ENCODE measurements at regions of chr3 and their contacts with region 1.

Region 1: GRCh38 chr3:112676659-112677234 is 35.8 kb upstream of the CCDC80 start:
- DNase-seq: peak; percentile 57
- ATAC-seq: peak; percentile 98
- H3K4me3 Mint-ChIP-seq: peak overlapping the region; percentile 67
- H3K27ac Mint-ChIP-seq: peak overlapping the region; percentile 84
- H3K4me1 Mint-ChIP-seq: peaks cover 25% of the 10 kb centered on the region
- H3K27me3 Mint-ChIP-seq: peaks cover 8% of the 10 kb centered on the region
- CTCF ChIP-seq: no peak

Region 2: GRCh38 chr3:112718516-112718915 is 41.8 kb after region 1 on chr3:
- CTCF ChIA-PET with region 1: no interaction called
- POLR2A ChIA-PET with region 1: no interaction called
- intact Hi-C with region 1: no loop called
- DNase-seq: no peak
- ATAC-seq: no peak
- H3K4me3 Mint-ChIP-seq: no peak overlapping the region
- H3K27ac Mint-ChIP-seq: no peak overlapping the region
- H3K4me1 Mint-ChIP-seq: no peaks in the 10 kb centered on the region
- H3K27me3 Mint-ChIP-seq: peaks cover 6% of the 10 kb centered on the region
- CTCF ChIP-seq: no peak

Region 3: DNA sequence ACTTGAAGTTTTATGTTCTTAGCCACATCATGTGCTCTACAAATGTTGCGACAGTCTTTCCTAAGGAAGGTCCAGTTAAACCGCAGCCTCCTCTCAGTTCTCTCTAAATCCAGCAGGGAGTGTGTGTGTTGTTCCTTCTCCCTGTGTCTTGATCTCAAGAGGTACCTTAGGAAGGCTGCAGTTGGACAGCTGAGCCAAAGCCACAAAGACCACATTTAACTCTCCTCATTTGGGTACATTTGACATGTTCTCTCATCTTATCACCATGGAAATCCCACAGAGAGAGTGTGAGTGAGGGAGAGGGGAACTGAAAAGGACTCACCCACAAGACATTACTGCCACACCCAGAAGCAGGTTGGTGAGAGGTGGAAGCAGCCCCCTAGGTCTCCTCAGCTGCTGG is 90.4 kb after region 1 on chr3:
- CTCF ChIA-PET with region 1: no interaction called
- POLR2A ChIA-PET with region 1: no interaction called
- intact Hi-C with region 1: loop called (anchors 2 kb)
- DNase-seq: no peak
- ATAC-seq: peak; percentile 97
- H3K4me3 Mint-ChIP-seq: peak overlapping the region; percentile 25
- H3K27ac Mint-ChIP-seq: peak overlapping the region; percentile 44
- H3K4me1 Mint-ChIP-seq: peaks cover 37% of the 10 kb centered on the region
- H3K27me3 Mint-ChIP-seq: no peaks in the 10 kb centered on the region
- CTCF ChIP-seq: no peak

Region 4: GRCh38 chr3:112873632-112874031 is 196.9 kb after region 1 on chr3:
- CTCF ChIA-PET with region 1: no interaction called
- POLR2A ChIA-PET with region 1: no interaction called
- intact Hi-C with region 1: loop called (anchors 2 kb)
- DNase-seq: no peak
- ATAC-seq: peak; percentile 79
- H3K4me3 Mint-ChIP-seq: peak overlapping the region; percentile 75
- H3K27ac Mint-ChIP-seq: peak overlapping the region; percentile 80
- H3K4me1 Mint-ChIP-seq: peaks cover 43% of the 10 kb centered on the region
- H3K27me3 Mint-ChIP-seq: no peaks in the 10 kb centered on the region
- CTCF ChIP-seq: no peak

Region 5: GRCh38 chr3:112990672-112991602 is 314.2 kb after region 1 on chr3 and contains the start of gene GTPBP8:
- CTCF ChIA-PET with region 1: no interaction called
- POLR2A ChIA-PET with region 1: interaction called, 7 read pairs
- intact Hi-C with region 1: loop called (anchors 1 kb)
- DNase-seq: peak; percentile 79
- ATAC-seq: peak; percentile 86
- H3K4me3 Mint-ChIP-seq: peak within 1 kb of the TSS; percentile 92
- H3K27ac Mint-ChIP-seq: peak within 1 kb of the TSS; percentile 92
- H3K4me1 Mint-ChIP-seq: peaks cover 27% of the 10 kb centered on the region
- H3K27me3 Mint-ChIP-seq: no peaks in the 10 kb centered on the region
- CTCF ChIP-seq: no peak
- total RNA-seq, gene GTPBP8: 14.3 and 18.1 TPM in 2 replicates

Region 6: DNA sequence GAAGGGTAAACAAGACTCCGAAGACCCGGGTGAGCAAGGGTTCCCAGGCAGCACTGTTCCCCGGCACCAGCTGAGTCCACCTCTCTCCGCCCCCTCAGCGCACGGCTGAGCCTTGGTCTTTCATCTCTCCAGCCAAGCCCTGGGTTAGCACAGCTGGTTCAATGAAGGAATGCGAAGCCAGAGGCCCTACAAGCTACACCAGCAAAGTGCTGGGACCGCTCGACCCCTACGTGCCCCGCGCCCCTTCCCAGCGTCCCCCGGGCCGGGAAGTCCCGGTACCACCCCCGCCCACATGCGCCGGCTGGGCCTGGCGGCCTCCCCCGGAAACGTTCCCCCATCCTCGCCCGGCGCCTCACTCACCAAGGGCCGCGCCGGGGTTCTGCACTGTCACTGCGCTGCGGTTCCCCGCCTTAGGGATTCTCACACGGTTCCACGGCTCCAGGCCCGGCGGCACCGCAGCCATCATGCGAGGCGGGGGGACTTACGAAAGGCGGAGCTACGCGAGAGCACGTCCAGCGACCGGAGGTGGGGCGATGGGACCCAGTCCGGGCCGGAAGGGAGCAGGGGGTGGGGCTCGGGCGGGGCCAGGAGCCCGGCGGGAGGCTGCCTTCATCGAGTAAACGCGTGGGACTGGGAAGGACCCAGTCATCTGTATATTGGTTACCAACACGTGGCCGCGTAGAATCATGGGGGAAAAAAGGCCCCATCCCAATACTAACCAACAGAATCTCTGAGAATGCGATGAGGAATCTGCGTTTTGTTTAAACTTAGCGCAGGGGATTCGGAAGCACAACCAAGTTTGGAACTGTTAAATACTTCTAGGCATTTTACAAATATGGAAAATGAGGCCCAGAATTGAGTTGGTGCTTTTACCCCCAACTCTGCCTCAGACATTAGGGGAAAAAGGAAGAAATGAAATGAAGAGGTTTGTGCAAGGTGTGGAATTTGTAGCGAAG is 342.7 kb after region 1 on chr3:
- CTCF ChIA-PET with region 1: no interaction called
- POLR2A ChIA-PET with region 1: interaction called, 9 read pairs
- intact Hi-C with region 1: loop called (anchors 1 kb)
- DNase-seq: peak; percentile 81
- ATAC-seq: peak; percentile 87
- H3K4me3 Mint-ChIP-seq: peak overlapping the region; percentile 92
- H3K27ac Mint-ChIP-seq: peak overlapping the region; percentile 95
- H3K4me1 Mint-ChIP-seq: peaks cover 54% of the 10 kb centered on the region
- H3K27me3 Mint-ChIP-seq: no peaks in the 10 kb centered on the region
- CTCF ChIP-seq: no peak

Measured in activated B cell treated with CpG ODN at 0.5 μM for 24 hours (primary cell).